ENCODE measurements at regions of chr10 and their contacts with region 1.

Region 1: DNA sequence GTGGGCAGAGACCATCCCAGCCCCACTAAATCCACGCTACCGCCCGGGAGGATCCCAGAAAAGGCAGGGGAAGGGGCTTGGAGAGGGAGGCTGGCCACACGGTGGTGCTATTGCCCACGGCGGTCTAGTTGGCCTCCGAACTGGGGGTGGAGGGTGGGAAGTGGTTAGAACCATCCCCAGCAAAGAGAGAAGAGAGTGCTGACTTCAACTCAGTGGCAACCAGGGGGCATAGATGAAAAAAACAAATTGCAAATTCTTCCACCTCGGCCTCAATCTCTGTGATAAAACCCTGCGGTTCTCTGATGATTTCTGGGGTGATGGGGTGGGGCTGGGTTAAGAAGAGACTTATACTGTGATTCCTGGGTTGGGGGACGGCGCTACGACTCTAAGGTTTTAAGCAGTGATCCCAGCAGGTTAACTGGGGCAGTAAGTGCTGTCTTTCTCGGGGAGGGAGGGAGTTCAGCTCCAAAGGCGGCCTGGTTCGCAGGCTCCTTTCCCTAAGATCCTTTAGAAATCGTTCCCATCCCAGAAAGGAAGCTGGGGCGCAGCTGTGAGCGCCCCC is 154.5 kb upstream of the LYZL2 start:
- DNase-seq: peak; percentile 37 to 92
- H3K4me3 ChIP-seq: peak overlapping the region; percentile 83 to 95
- H3K27ac ChIP-seq: peak overlapping the region; percentile 98
- H3K4me1 ChIP-seq: peaks cover 6 to 13% of the 10 kb centered on the region in 2 donors
- H3K27me3 ChIP-seq: no peaks in the 10 kb centered on the region
- CTCF ChIP-seq: peak; percentile 89 to 91 (median 90)

Region 2: GRCh38 chr10:30727524-30727923 is 56.5 kb before region 1 on chr10:
- intact Hi-C with region 1: loop called (anchors 2 kb)
- DNase-seq: no peak
- H3K4me3 ChIP-seq: no peak overlapping the region
- H3K27ac ChIP-seq: no peak overlapping the region
- H3K4me1 ChIP-seq: peaks cover 0 to 2% of the 10 kb centered on the region in 2 donors
- H3K27me3 ChIP-seq: no peaks in the 10 kb centered on the region
- CTCF ChIP-seq: no peak

Region 3: GRCh38 chr10:30818010-30818531 is 34.1 kb after region 1 on chr10:
- intact Hi-C with region 1: loop called (anchors 1 kb)
- DNase-seq: peak; percentile 43 to 87
- H3K4me3 ChIP-seq: peak overlapping the region in 1 of 2 donors; percentile 67
- H3K27ac ChIP-seq: peak overlapping the region; percentile 90 to 94
- H3K4me1 ChIP-seq: peaks cover 6 to 45% of the 10 kb centered on the region in 2 donors
- H3K27me3 ChIP-seq: no peaks in the 10 kb centered on the region
- CTCF ChIP-seq: no peak

Region 4: GRCh38 chr10:31133628-31134302 is 349.7 kb after region 1 on chr10:
- intact Hi-C with region 1: loop called (anchors 10 kb)
- DNase-seq: peak; percentile 26 to 89
- H3K4me3 ChIP-seq: peak overlapping the region; percentile 61 to 74
- H3K27ac ChIP-seq: peak overlapping the region; percentile 95 to 96
- H3K4me1 ChIP-seq: peaks cover 3 to 22% of the 10 kb centered on the region in 2 donors
- H3K27me3 ChIP-seq: no peaks in the 10 kb centered on the region
- CTCF ChIP-seq: no peak

Region 5: DNA sequence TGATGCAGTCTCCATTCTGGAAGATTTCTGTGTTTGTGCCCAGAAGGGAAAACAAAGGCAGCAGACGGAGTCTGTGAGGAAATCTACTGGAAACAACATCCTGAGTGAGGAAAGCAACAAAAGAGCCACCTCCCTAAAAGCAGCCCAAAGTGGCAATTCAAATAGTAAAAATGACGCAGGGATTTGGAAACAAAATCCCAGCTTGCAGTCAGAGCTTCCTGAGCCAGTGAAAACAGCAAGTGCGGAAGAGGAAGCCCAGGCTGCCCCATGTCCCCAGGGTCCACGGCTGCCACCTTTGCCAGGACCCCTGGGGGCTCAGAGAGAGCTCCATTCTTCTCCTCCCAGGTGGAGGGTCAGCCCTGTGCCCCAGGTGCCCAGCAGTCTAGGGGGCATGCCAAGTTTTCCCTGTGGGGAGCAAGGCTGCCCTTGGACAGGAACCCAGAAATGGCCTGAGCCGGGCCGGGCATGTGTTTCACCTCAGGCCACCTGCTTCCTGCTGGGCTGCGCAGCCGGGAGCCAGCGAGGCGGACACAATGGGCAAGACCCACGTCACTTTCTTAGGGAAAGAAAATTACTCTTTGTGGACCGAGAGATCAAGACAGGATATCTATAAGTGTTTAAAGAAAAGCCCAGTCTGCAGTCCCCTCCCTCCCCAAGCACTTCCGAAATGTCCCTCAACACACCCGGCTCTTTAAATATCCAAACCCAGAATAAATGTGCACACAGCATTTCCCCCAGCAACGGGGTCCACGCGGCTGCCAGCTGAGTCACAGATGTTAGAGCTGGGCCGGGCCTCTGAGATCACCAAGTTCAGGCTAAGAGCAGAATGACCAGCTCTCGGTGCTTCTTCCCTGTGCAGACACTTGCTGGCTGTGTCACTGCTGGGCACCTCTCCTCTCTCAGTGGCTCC is 913.5 kb after region 1 on chr10:
- intact Hi-C with region 1: loop called (anchors 2 kb)
- DNase-seq: peak; percentile 90 to 98
- H3K4me3 ChIP-seq: peak overlapping the region; percentile 38 to 56
- H3K27ac ChIP-seq: peak overlapping the region; percentile 98 to 99
- H3K4me1 ChIP-seq: peaks cover 13 to 52% of the 10 kb centered on the region in 2 donors
- H3K27me3 ChIP-seq: no peaks in the 10 kb centered on the region
- CTCF ChIP-seq: no peak

Region 6: DNA sequence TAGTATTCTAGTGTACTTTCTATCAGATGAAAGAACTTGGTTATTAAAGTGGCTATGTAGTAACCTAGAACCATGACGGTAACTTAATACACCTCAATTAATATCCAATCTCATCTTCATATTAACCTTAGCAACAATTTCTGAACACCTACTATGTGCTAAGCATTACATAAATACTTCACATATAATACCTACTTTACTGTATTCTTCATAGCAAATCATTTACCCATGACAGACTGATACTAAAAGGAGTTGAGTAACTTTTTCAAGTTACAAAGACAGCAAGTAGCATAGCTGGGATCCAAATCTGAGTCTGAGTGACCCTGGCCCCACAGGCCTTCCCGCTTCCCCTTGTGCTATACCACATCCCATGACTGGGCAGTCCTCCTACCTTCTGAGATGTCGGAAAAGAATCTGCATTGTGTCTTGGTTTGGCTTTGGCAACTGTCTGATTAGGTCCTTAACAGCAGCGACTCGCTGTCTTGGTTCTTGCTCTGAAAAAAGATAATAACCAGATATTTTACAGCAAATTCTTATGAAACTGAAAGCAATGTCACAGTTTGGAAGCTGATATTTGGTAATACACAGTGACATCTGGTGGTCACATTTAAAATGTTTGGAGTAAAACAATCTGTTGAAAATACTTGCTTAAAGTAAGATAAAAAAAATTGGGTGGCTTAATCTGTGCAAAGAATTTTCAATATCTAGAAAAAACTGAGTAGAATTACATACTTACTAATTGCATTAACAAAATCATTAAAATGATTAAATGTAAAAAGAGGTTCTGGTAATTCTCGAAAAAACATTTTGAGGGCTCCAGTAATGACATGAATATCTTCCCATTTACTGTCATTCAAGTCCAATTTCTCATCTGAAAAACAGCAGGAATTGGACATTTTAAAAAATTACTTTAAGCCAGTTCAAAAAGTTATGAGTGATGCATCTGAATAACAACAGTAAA is 1024.5 kb after region 1 on chr10:
- intact Hi-C with region 1: loop called (anchors 1 kb)
- DNase-seq: no peak
- H3K4me3 ChIP-seq: peak overlapping the region; percentile 20 to 49
- H3K27ac ChIP-seq: peak overlapping the region; percentile 38 to 66
- H3K4me1 ChIP-seq: no peaks in the 10 kb centered on the region
- H3K27me3 ChIP-seq: no peaks in the 10 kb centered on the region
- CTCF ChIP-seq: peak; percentile 49 to 66 (median 60)